Activated naive CD4-positive, alpha-beta T cell treated with anti-CD3 and anti-CD28 coated beads for 36 hours (primary cell): ENCODE measurements at regions of chr11 and their contacts with region 1.

Region 1: DNA sequence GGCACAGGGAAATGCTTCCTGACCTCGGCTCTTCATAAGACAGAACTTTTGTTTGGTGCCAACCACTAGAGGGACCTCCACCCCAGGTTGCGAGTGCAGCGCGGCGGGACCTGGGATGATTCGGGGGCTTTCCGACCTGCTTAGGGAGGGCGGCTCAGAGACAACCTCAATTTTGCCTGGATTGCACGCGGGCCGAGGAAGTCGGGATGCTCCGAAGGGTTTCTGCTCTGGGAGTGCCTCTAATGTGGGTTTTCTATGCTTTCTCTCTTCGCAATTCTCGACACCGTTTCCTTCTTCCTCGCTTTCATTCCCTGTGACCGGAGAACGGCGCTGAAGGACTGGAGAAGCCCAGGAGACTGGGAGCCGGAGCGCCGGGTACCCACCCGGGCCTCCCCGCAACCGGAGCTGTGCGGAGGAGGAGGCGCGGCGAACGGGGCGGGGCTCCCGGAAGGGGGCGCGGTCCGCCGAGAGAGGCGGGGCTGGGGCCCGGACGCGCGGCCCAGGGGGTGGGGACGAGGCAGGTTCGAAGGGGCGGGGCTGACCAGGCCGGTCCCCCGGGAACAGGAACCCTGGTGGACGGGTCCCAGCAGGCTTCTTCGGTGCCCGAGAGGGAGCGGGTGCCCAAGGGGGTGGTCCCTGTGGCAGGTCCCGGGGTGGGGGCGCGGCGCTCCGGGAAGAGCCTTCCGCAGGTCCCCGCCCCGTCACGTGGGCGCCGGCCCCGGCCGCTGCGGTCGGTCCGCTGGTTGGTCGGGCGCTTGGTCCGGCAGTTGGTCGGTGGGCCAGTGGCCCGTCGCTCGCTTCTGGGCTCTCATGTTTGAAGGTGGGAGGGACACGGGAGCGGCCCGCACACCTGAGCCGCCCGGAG is at the start of gene PPFIBP2:
- DNase-seq: peak; percentile 87
- H3K4me3 Mint-ChIP-seq: peak within 1 kb of the TSS; percentile 86
- H3K27ac Mint-ChIP-seq: peak within 1 kb of the TSS; percentile 90
- H3K4me1 Mint-ChIP-seq: peaks cover 48% of the 10 kb centered on the region
- H3K27me3 Mint-ChIP-seq: no peaks in the 10 kb centered on the region
- total RNA-seq, gene PPFIBP2: 22.2 to 26.1 TPM

Region 2: DNA sequence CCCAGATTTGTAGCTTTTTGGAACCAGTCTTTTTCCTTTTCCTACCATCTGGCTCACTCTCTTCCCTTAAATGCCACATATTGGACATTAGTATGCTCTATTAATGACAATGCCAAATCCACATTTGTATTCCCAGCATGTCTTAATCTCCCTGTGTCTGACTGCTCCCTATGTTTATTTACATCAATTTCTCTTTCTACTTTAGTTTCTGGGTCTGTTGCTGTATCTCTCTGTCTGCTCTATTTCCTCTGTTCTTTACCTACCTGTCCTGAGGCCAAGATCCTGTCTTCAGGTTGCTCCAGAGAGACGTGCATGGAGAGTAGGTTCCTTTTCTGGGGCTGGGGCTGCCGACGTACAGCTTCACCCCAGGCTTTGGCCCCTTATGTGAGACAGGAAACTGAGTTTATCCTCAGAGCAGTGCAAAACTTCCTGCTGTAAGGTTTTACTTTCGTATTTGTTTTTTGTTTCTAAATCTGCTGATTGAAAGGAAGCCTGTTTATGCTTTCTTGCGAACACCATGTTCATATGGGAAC is 767.3 kb before region 1 on chr11:
- CTCF ChIA-PET with region 1: no interaction called
- intact Hi-C with region 1: loop called (anchors 10 kb)
- DNase-seq: peak; percentile 60
- H3K4me3 Mint-ChIP-seq: no peak overlapping the region
- H3K27ac Mint-ChIP-seq: no peak overlapping the region
- H3K4me1 Mint-ChIP-seq: peaks cover 28% of the 10 kb centered on the region
- H3K27me3 Mint-ChIP-seq: no peaks in the 10 kb centered on the region

Region 3: GRCh38 chr11:7538031-7538430 is 24.6 kb after region 1 on chr11:
- CTCF ChIA-PET with region 1: interaction called, 10 read pairs
- intact Hi-C with region 1: loop called (anchors 1 kb)
- DNase-seq: peak; percentile 65
- H3K4me3 Mint-ChIP-seq: no peak overlapping the region
- H3K27ac Mint-ChIP-seq: peak overlapping the region; percentile 44
- H3K4me1 Mint-ChIP-seq: peaks cover 73% of the 10 kb centered on the region
- H3K27me3 Mint-ChIP-seq: no peaks in the 10 kb centered on the region

Region 4: DNA sequence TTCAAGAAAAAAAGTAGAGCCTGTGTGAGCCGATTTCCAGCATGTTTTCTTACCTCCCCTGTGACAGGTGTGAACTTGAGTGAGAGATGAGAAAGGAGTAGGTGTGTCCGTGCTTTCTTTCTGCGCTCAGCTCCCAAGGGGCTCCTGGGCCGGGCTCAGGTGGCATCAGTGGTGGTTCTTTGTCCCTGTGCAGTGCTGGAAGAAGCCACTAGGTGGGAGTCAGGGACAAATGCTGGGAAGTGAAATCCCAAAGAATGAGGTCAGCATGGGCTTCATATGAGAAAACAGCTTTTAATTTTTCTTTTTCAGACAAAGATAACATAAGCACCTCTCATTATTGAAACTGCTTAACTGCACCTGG is 58.2 kb after region 1 on chr11:
- CTCF ChIA-PET with region 1: interaction called, 11 read pairs
- intact Hi-C with region 1: loop called (anchors 2 kb)
- DNase-seq: peak; percentile 62
- H3K4me3 Mint-ChIP-seq: no peak overlapping the region
- H3K27ac Mint-ChIP-seq: no peak overlapping the region
- H3K4me1 Mint-ChIP-seq: peaks cover 19% of the 10 kb centered on the region
- H3K27me3 Mint-ChIP-seq: no peaks in the 10 kb centered on the region

Region 5: GRCh38 chr11:7657306-7658025 is 144.0 kb after region 1 on chr11:
- CTCF ChIA-PET with region 1: interaction called, 3 read pairs
- intact Hi-C with region 1: loop called (anchors 2 kb)
- DNase-seq: peak; percentile 30
- H3K4me3 Mint-ChIP-seq: no peak overlapping the region
- H3K27ac Mint-ChIP-seq: no peak overlapping the region
- H3K4me1 Mint-ChIP-seq: no peaks in the 10 kb centered on the region
- H3K27me3 Mint-ChIP-seq: no peaks in the 10 kb centered on the region

Region 6: GRCh38 chr11:7672960-7673723 is 159.7 kb after region 1 on chr11 and contains the start of gene CYB5R2:
- CTCF ChIA-PET with region 1: interaction called, 5 read pairs
- intact Hi-C with region 1: loop called (anchors 1 kb)
- DNase-seq: peak; percentile 17
- H3K4me3 Mint-ChIP-seq: peak within 1 kb of the TSS; percentile 64
- H3K27ac Mint-ChIP-seq: peak within 1 kb of the TSS; percentile 66
- H3K4me1 Mint-ChIP-seq: peaks cover 49% of the 10 kb centered on the region
- H3K27me3 Mint-ChIP-seq: peaks cover 36% of the 10 kb centered on the region
- total RNA-seq, gene CYB5R2: 5.5 to 8.2 TPM

Region 7: DNA sequence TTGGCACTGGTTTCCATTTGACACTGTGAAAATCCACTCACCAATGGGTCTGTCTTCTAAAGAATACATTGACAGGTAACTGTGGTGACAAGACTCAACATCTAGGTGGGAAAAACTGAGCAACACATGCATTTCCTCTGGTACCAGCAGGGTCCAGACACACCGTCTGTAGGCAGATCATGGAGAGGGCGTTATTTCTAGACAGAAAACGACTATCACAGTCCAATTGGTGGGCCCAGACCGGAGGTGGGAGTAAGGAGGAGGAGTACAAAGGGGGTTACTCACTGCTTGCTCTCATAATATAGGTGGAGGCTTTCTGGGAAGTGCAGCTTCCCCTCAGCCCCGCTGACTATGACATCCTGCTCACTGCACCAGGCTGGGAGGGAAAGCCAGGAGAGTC is 183.0 kb after region 1 on chr11:
- CTCF ChIA-PET with region 1: interaction called, 14 read pairs
- intact Hi-C with region 1: loop called (anchors 1 kb)
- DNase-seq: no peak
- H3K4me3 Mint-ChIP-seq: no peak overlapping the region
- H3K27ac Mint-ChIP-seq: no peak overlapping the region
- H3K4me1 Mint-ChIP-seq: peaks cover 7% of the 10 kb centered on the region
- H3K27me3 Mint-ChIP-seq: peaks cover 23% of the 10 kb centered on the region